ENCODE measurements at regions of chr9 and their contacts with region 1.

Region 1: DNA sequence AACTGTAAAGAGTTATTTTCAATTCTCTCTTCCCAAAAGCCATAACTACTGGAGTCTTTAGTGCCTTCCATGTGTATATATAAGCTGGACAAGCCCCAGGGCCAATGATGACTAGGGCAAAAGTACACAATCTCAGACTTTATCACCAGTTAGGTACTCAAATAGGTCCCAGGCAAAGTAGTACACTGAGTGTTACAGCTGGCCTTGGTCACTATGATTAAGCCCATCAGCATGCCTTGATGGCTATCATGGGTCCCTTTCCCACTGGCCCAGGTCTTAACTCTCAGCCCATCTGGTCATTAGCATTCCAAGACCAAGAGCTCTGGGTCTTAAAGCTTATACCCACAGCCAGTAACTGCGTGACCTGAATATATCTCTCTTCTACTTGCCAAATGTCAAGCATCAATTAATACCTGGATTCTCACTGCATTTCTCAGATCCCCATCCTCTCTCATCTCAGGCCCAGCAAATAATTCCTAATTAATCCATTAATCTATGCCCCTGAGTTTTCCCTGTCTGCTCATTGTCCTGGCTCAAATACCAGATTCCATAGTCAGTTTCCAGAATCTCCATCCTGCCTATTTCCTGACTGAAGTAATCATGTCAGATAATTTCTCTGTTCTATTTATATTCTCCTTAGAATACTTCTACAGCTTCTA is 62.3 kb downstream of the NR6A1 start:
- DNase-seq: no peak
- H3K4me3 Mint-ChIP-seq: no peak overlapping the region
- H3K27ac Mint-ChIP-seq: no peak overlapping the region
- H3K4me1 Mint-ChIP-seq: peaks cover 44% of the 10 kb centered on the region
- H3K27me3 Mint-ChIP-seq: no peaks in the 10 kb centered on the region
- CTCF ChIP-seq: no peak

Region 2: GRCh38 chr9:124551472-124552272 is 157.1 kb before region 1 on chr9:
- CTCF ChIA-PET with region 1: interaction called, 4 read pairs
- intact Hi-C with region 1: loop called (anchors 1 kb)
- DNase-seq: peak; percentile 48
- H3K4me3 Mint-ChIP-seq: no peak overlapping the region
- H3K27ac Mint-ChIP-seq: no peak overlapping the region
- H3K4me1 Mint-ChIP-seq: no peaks in the 10 kb centered on the region
- H3K27me3 Mint-ChIP-seq: no peaks in the 10 kb centered on the region
- CTCF ChIP-seq: peak; percentile 50

Region 3: GRCh38 chr9:124658165-124659017 is 50.4 kb before region 1 on chr9:
- CTCF ChIA-PET with region 1: interaction called, 4 read pairs
- intact Hi-C with region 1: loop called (anchors 2 kb)
- DNase-seq: peak; percentile 78
- H3K4me3 Mint-ChIP-seq: peak overlapping the region; percentile 85
- H3K27ac Mint-ChIP-seq: peak overlapping the region; percentile 99
- H3K4me1 Mint-ChIP-seq: peaks cover 9% of the 10 kb centered on the region
- H3K27me3 Mint-ChIP-seq: no peaks in the 10 kb centered on the region
- CTCF ChIP-seq: no peak

Region 4: GRCh38 chr9:124754289-124754688 is 45.5 kb after region 1 on chr9:
- CTCF ChIA-PET with region 1: no interaction called
- intact Hi-C with region 1: loop called (anchors 1 kb)
- DNase-seq: no peak
- H3K4me3 Mint-ChIP-seq: no peak overlapping the region
- H3K27ac Mint-ChIP-seq: no peak overlapping the region
- H3K4me1 Mint-ChIP-seq: peaks cover 34% of the 10 kb centered on the region
- H3K27me3 Mint-ChIP-seq: no peaks in the 10 kb centered on the region
- CTCF ChIP-seq: no peak

Region 5: DNA sequence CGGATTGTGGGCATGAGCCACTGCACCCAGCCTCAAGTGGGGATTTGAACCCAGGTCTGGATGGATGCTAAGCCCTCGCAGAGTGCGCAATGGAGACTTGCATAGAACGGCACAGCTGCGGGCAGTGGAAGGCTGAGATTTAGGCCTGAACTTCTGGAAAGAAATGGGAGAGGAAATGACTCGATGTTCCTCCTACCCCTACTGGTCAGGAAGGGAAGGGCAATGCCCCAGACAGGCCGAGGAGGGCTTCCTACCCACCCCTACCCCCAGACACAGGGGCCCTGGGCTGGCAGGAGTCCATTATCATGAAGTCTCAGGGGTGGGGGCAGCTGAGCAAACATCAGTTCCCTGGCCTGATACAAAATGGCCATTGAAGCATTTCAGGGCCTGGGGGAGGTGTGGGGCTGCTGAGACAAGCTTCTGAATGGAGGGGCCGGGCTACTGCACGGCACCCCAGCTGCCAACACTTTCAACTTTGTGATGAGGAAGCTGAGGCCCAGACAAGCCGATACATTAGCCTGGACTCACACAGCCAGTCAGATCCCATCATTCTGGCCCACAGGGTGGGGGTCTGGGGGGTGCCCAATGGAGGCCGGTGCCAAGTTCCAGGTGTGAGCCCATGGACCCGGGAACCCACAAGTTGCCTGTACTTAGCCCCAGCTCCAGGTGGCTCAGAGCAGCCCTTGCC is 131.0 kb after region 1 on chr9:
- CTCF ChIA-PET with region 1: no interaction called
- intact Hi-C with region 1: no loop called
- DNase-seq: no peak
- H3K4me3 Mint-ChIP-seq: no peak overlapping the region
- H3K27ac Mint-ChIP-seq: no peak overlapping the region
- H3K4me1 Mint-ChIP-seq: peaks cover 17% of the 10 kb centered on the region
- H3K27me3 Mint-ChIP-seq: no peaks in the 10 kb centered on the region
- CTCF ChIP-seq: peak; percentile 37